CD14-positive monocyte (primary cell): ENCODE measurements at regions of chr10 and their contacts with region 1.

Region 1: DNA sequence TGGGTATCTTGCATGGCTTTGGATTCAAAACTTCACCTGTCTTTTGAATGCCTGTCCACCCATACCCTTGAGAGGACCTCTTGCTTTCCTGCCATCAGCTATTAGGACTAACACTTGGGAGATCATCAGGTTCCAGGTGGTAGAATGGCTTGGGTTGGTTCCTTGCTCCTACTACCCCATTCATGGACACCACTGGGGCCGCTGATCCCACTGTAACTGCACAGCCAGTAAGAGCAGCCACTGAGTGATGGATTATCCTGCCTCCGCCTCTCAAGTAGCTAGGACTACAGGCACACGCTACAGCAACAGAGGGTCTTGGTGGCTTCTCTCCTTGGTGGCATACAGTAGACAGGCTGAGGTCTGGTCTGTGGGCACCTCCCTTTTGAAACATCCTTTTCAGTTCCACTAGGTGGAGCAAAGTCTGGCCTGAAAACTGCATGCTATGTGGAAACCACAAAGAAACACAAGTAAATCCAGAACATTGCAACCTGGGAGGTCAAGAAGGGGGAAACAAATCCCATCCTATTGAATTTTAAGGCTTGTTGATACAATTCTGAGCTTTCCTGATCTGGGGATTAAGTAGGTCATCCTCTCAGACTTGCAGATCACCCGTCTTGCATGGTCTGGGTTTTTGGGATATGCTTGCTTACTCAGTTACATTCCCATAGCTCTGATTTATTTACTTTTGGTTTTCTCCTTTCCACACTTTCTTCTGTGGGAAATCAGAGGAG is 9.4 kb downstream of the WBP1L start:
- DNase-seq: peak; percentile 39 to 50 (median 45)
- H3K4me3 ChIP-seq: no peak overlapping the region
- H3K4me3 Mint-ChIP-seq: no peak overlapping the region
- H3K27ac ChIP-seq: peak overlapping the region in 1 of 2 donors; percentile 64
- H3K27ac Mint-ChIP-seq: peak overlapping the region; percentile 45 to 87 (median 72)
- H3K4me1 ChIP-seq: peaks cover 10 to 15% of the 10 kb centered on the region in 2 donors
- H3K4me1 Mint-ChIP-seq: peaks cover 24% of the 10 kb centered on the region
- H3K27me3 ChIP-seq: no peaks in the 10 kb centered on the region
- H3K27me3 Mint-ChIP-seq: no peaks in the 10 kb centered on the region
- CTCF ChIP-seq: peak; percentile 56

Region 2: DNA sequence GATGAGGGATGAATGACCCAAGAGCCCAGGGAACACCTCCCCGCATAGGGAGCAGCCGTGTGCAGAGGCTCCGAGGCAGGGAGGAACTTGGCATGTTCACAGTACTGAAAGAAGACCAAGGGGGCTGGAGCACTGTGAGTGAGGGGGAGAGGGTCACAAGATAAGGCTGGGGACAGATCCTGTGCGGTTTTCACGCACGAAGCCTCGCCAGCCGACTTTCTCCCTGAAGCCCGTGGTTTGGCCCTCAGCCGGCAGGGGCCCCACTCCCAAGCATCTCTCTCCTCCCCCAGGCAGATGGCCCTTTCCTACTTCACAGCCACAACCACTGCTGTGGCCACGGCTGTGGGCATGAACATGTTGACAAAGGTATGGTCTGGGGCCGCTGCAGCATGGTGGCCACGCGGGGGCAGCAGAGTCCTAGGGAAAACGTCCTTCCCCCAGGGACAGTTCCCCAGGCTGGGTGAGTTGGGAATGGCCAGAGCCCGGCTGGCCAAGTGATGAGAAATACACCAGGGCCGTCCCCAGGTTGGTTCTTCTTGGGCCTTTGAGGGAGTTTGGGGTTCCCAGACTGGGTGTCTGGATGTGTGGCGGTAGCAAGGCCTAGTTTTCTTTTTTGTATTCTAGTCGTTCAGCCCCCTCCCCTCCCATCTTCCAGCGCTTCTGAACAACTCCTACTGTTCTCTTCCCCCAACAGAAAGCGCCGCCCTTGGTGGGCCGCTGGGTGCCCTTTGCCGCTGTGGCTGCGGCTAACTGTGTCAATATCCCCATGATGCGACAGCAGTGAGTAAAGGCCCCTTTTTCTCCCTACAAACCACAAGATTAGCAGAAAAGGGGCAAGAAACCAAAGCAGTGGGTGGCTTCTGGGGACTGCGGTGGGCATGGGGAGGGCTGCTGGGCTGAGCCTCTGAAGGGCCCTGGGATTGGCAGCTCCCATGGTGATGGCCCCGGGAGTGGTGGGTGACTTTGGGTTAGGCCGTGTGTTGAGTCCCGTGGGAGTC is 23.8 kb before region 1 on chr10:
- intact Hi-C with region 1: no loop called
- DNase-seq: peak; percentile 72 to 81 (median 79)
- H3K4me3 ChIP-seq: no peak overlapping the region
- H3K4me3 Mint-ChIP-seq: peak overlapping the region in 1 of 2 donors; percentile 45
- H3K27ac ChIP-seq: peak overlapping the region in 1 of 2 donors; percentile 31
- H3K27ac Mint-ChIP-seq: peak overlapping the region in 3 of 7 donors; percentile 22 to 60 (median 24)
- H3K4me1 ChIP-seq: no peaks in the 10 kb centered on the region
- H3K4me1 Mint-ChIP-seq: peaks cover 20% of the 10 kb centered on the region
- H3K27me3 ChIP-seq: no peaks in the 10 kb centered on the region
- H3K27me3 Mint-ChIP-seq: peaks cover 0 to 2% (median 2%) of the 10 kb centered on the region in 3 donors
- CTCF ChIP-seq: peak; percentile 88

Region 3: DNA sequence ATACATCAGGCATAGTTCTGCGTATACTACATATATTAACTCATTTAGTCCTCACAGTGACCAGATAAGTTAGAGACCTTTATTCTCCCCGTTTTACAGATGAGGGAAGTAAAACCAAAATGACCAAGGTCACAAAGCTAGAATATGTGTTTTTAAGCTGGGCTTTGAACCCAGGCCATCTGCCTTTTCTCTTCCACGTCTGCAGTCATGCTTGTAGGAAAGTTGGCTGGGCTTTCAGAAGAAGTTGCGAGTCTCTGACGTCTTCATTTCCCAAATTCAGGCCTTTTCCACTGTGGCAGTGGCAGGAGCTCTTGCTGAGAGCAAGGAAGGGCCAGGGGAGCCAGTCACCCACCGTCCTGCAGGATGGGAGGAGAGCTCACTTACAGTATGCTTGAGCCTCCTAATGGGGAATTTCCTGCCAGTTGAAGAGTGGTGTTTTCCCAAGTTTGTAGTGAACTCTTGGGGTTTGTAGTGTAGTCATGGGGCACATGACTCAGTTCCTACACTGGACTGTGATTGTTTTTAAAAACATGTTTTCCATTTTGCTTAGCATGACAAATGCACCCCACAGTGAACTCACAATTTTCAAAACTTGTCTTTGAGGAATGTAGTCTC is 49.9 kb after region 1 on chr10:
- intact Hi-C with region 1: loop called in 1 of 2 experiments (anchors 10 kb)
- DNase-seq: peak; percentile 68 to 93 (median 77)
- H3K4me3 ChIP-seq: no peak overlapping the region
- H3K4me3 Mint-ChIP-seq: peak overlapping the region in 1 of 2 donors; percentile 46
- H3K27ac ChIP-seq: peak overlapping the region; percentile 50 to 83
- H3K27ac Mint-ChIP-seq: peak overlapping the region; percentile 86 to 98 (median 94)
- H3K4me1 ChIP-seq: peaks cover 23 to 30% of the 10 kb centered on the region in 2 donors
- H3K4me1 Mint-ChIP-seq: peaks cover 36% of the 10 kb centered on the region
- H3K27me3 ChIP-seq: no peaks in the 10 kb centered on the region
- H3K27me3 Mint-ChIP-seq: no peaks in the 10 kb centered on the region
- CTCF ChIP-seq: no peak